Dorsolateral prefrontal cortex (tissue), 120 donors: ENCODE measurements at regions of chr16 and their contacts with region 1.

Region 1: DNA sequence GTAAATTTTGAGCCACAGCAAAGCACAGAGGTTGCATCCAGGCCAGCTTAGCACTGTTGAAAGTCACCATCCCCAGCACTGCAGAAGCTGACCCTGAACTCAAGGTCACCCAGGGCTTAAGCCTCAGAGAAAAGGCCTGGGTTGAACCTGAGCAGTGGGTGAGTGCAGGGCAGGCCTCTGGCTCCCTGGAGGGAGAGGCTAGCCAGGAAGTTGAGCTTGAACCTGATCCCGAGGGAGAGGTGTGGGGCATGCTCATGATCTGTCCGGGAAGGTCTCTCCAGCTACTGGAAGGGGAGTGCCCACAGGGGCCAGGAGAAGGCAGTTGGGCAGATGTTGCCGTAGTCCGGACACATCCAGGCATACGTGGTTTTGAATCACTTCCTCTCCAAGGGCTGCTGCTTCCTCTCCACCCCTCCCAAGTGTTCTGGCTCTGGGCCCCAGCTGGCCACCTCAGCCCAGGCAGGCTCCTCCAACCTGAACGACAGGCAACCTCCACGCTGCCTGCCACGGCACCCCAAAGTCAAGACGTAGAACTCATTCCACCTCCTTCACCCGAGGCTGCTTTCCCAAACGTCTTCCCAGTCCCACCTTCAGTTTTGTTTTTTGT is 18.4 kb downstream of the CARHSP1 start:
- DNase-seq: peak in 1 of 10 donors; percentile 31
- H3K4me3 ChIP-seq: no peak overlapping the region
- H3K27ac ChIP-seq: peak overlapping the region in 12 of 59 donors; percentile 13 to 61 (median 31)
- H3K27me3 ChIP-seq: no peaks in the 10 kb centered on the region
- CTCF ChIP-seq: no peak

Region 2: GRCh38 chr16:8530752-8531384 is 319.5 kb before region 1 on chr16:
- intact Hi-C with region 1: no loop called
- DNase-seq: no peak
- H3K4me3 ChIP-seq: no peak overlapping the region
- H3K27ac ChIP-seq: no peak overlapping the region
- H3K27me3 ChIP-seq: peaks cover 0 to 22% (median 3%) of the 10 kb centered on the region in 45 donors
- CTCF ChIP-seq: no peak

Region 3: GRCh38 chr16:8804313-8804712 is 46.1 kb before region 1 on chr16:
- intact Hi-C with region 1: loop called in 1 of 2 experiments (anchors 2 kb)
- DNase-seq: no peak
- H3K4me3 ChIP-seq: no peak overlapping the region
- H3K27ac ChIP-seq: no peak overlapping the region
- H3K27me3 ChIP-seq: no peaks in the 10 kb centered on the region
- CTCF ChIP-seq: no peak